Calu3 (cell line): ENCODE measurements at regions of chr10 and their contacts with region 1.

Region 1: GRCh38 chr10:23525406-23525805 is 86.5 kb downstream of the OTUD1 start:
- DNase-seq: peak; percentile 46
- H3K4me3 Mint-ChIP-seq: no peak overlapping the region
- H3K27ac Mint-ChIP-seq: no peak overlapping the region
- H3K4me1 Mint-ChIP-seq: peaks cover 31% of the 10 kb centered on the region
- H3K27me3 Mint-ChIP-seq: peaks cover under 1% of the 10 kb centered on the region
- CTCF ChIP-seq: peak; percentile 44

Region 2: DNA sequence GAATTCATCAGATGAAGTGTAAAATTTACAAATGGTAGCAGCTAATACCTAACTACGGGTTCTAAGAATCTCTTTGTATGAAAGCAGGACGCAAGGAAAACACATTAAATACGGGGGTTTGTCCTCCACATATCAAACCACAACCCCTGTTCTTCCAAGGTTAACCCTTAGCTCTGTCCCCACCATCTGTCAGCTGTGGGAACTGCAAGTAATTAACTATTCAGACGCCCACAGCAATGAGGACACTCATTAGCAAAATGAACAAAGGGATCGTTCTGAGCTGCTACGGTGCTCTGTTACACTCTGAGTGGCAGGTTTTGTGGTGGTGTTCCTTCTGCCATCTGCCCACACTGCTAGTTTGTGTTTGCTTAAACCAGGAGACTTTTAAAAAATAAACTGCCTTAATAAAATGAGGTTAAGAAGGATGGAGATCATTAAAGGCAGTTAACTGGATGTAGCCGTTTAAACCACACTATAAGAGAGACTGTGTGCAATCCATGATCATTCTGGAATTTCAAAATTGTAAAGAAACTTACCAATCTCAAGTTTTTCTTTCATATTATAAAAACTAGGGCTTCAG is 232.2 kb before region 1 on chr10:
- CTCF ChIA-PET with region 1: interaction called, 3 read pairs
- intact Hi-C with region 1: loop called (anchors 1 kb)
- DNase-seq: peak; percentile 68
- H3K4me3 Mint-ChIP-seq: no peak overlapping the region
- H3K27ac Mint-ChIP-seq: no peak overlapping the region
- H3K4me1 Mint-ChIP-seq: peaks cover 8% of the 10 kb centered on the region
- H3K27me3 Mint-ChIP-seq: no peaks in the 10 kb centered on the region
- CTCF ChIP-seq: peak; percentile 70

Region 3: GRCh38 chr10:23368816-23369640 is 156.4 kb before region 1 on chr10:
- CTCF ChIA-PET with region 1: no interaction called
- intact Hi-C with region 1: no loop called
- DNase-seq: no peak
- H3K4me3 Mint-ChIP-seq: no peak overlapping the region
- H3K27ac Mint-ChIP-seq: no peak overlapping the region
- H3K4me1 Mint-ChIP-seq: peaks cover 20% of the 10 kb centered on the region
- H3K27me3 Mint-ChIP-seq: no peaks in the 10 kb centered on the region
- CTCF ChIP-seq: no peak

Region 4: GRCh38 chr10:23408330-23408976 is 117.0 kb before region 1 on chr10:
- CTCF ChIA-PET with region 1: no interaction called
- intact Hi-C with region 1: no loop called
- DNase-seq: no peak
- H3K4me3 Mint-ChIP-seq: no peak overlapping the region
- H3K27ac Mint-ChIP-seq: no peak overlapping the region
- H3K4me1 Mint-ChIP-seq: no peaks in the 10 kb centered on the region
- H3K27me3 Mint-ChIP-seq: no peaks in the 10 kb centered on the region
- CTCF ChIP-seq: no peak

Region 5: GRCh38 chr10:23439946-23440729 is 85.3 kb before region 1 on chr10:
- CTCF ChIA-PET with region 1: no interaction called
- intact Hi-C with region 1: loop called (anchors 5 kb)
- DNase-seq: peak; percentile 35
- H3K4me3 Mint-ChIP-seq: peak overlapping the region; percentile 75
- H3K27ac Mint-ChIP-seq: no peak overlapping the region
- H3K4me1 Mint-ChIP-seq: peaks cover 10% of the 10 kb centered on the region
- H3K27me3 Mint-ChIP-seq: no peaks in the 10 kb centered on the region
- CTCF ChIP-seq: no peak

Region 6: DNA sequence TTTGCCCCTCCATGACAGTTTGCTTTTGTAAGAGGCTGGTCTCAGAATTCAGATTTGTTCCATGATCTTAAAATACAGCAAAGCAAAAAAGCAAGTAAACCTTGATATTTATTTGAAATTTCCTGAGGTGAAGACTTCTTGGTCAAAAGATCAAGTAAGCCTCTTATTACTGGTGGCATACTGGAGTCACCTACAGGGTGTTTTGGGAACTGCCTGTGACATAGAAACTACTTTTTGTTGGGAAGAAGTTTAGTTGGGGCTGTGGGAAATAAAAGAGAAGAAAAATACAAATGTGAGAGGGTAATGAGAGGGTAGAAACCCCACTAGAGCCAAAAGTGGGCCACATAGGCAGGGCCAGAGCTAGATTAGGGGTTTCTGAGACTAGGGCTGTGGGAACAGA is 131.3 kb after region 1 on chr10:
- CTCF ChIA-PET with region 1: no interaction called
- intact Hi-C with region 1: loop called (anchors 10 kb)
- DNase-seq: no peak
- H3K4me3 Mint-ChIP-seq: no peak overlapping the region
- H3K27ac Mint-ChIP-seq: no peak overlapping the region
- H3K4me1 Mint-ChIP-seq: no peaks in the 10 kb centered on the region
- H3K27me3 Mint-ChIP-seq: peaks cover 73% of the 10 kb centered on the region
- CTCF ChIP-seq: peak; percentile 32